GM13977 (cell line): ENCODE measurements at regions of chr4 and their contacts with region 1.

Region 1: GRCh38 chr4:88211473-88212252 is 53.2 kb upstream of the ABCG2 start:
- DNase-seq: peak; percentile 64
- CTCF ChIP-seq: peak; percentile 68

Region 2: DNA sequence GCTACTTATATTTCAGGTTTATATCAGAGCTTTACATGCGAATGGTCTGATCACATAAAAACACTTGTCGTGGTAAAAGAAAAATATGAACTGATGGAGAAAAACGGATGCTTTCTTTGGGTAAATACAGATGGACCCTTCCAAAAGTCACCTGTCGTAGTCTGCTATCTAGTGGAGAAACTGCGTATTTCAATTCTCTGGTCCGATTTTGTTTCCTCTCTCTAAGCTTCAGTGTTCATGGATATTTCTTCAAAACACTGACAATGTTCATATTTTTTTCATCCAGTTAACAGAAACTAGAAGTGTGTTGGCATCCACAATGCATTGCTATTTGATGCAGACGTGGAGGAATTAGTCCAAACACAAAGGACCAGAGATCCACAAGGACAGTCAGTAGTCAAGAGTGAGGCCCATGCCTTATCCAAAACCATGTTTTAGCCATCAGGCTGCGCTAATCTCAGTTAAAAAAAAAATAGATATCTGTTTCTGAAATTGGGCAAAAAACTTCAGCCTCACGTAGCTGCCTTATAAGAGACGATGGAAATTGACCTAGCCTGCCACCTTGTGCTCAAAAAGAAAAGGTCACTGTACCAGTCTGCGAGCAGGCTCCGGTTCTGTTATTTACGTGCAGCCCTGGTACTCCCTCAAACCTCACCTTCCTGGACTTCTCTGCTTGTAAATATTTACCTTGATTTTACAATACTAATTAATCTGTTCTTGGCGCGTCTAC is 362.9 kb before region 1 on chr4:
- in situ Hi-C with region 1: loop called (anchors 10 kb)
- DNase-seq: peak; percentile 43
- CTCF ChIP-seq: peak; percentile 66

Region 3: GRCh38 chr4:88033309-88033708 is 178.4 kb before region 1 on chr4:
- in situ Hi-C with region 1: loop called (anchors 10 kb)
- DNase-seq: peak; percentile 38
- CTCF ChIP-seq: peak; percentile 70

Region 4: DNA sequence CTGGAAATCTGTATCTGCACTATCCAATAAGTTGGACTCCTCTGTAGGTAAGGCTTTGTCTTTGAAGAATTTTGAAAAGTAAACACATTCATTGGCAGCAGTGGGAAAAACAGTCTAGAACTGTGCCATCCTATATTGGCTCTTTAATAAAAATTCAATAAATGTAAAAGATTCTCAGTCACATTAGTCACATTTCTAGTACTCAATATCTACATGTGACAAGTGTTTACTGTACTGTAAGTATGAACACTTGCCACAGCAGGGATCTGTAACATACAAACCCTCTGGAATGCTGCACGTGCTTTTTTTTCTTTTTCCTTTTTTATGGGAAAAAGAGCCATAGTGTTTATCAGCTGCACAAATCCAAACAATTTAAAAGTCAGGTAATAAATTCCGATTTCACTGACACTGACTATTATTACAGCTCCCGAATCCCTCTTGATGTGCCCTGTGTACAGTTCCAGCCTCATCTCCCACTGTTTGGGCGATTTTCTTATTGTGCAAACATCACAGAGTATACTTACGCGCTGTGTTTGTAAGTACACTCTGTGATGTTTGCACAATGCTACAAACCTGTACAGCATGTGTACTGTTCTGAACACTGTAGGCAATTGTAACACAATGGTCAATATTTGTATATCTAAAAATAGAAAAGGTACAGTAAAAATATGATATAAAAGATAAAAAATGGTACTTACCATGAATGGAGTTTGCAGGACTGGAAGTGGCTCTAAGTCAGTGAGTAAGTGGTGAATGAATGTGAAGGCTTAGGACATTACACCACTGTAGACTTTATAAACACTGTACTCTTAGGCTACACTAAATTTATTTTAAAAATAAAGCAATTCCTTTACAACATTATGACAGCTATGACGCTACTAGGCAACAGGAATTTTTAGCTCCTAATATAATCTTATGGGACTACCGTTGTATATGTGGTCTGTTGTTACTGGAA is 303.2 kb after region 1 on chr4:
- in situ Hi-C with region 1: loop called (anchors 5 kb)
- DNase-seq: no peak
- CTCF ChIP-seq: no peak